Activated CD4-positive, alpha-beta memory T cell treated with anti-CD3 and anti-CD28 coated beads for 36 hours (primary cell): ENCODE measurements at regions of chr11 and their contacts with region 1.

Region 1: DNA sequence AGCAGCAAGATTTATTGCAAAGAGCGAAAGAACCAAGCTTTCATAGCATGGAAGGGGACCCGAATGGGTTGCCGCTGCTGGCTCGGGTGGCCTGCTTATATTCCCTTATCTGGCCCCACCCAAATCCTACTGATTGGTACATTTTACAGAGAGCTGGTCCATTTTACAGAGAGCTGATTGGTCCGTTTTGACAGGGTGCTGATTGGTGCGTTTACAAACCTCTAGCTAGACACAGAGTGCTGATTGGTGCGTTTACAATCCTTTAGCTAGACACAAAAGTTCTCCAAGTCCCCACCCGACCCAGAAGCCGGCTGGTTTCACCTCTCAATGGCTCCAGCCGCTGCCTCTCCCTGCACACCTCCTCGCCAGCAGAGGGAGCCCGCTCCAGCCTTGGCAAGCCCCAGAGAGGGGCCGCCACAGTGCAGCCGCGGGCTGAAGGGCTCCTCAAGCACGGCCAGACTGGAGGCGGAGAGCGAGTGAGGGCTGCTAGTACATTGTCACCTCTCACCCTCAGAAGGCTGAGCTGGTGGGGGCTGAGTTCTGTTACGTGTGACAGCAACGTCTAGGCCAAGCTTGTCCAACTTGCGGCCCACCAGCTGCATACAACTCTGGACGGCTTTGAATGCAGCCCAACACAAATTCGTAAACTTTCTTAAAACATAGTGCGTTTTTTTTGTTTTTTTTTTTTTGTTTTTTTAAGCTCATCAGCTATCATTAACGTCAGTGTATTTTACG is 8.7 kb downstream of the PTH start:
- DNase-seq: peak; percentile 76
- H3K4me3 Mint-ChIP-seq: peak overlapping the region; percentile 66
- H3K27ac Mint-ChIP-seq: peak overlapping the region; percentile 71
- H3K4me1 Mint-ChIP-seq: peaks cover 6% of the 10 kb centered on the region
- H3K27me3 Mint-ChIP-seq: peaks cover 2% of the 10 kb centered on the region

Region 2: DNA sequence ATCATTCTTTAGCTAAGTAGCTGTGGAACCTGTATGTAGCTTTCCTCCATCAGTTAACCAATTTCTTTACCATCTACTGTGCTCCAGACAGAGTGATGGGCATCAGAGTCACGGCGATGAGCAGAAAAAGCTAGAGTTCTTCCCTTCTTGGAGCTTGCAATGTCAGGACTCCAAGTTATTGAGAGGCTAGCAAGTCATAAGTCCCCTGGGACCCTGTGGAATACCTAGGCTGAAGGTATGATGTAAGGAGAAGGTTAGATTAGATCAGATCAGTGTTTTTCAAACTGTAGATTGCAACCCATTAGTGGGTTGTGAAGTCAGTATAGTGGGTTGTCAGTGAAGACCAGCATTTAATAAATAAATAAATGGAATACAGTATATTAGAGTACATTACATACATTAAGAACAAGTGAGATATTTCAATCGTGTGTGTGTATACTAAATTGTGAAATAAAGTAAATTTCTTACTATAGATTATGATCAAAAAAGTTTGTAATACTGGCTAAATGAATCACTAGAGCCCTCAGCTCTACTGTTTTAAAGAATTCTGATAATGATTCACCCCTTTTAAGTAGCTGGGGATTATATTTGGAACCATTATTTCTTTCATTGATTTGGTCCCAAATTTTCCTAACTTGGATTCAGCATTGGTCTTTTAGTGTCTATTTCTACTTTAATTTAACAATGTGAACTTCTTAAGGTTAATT is 425.7 kb before region 1 on chr11:
- CTCF ChIA-PET with region 1: no interaction called
- POLR2A ChIA-PET with region 1: no interaction called
- intact Hi-C with region 1: no loop called
- DNase-seq: no peak
- H3K4me3 Mint-ChIP-seq: no peak overlapping the region
- H3K27ac Mint-ChIP-seq: no peak overlapping the region
- H3K4me1 Mint-ChIP-seq: no peaks in the 10 kb centered on the region
- H3K27me3 Mint-ChIP-seq: peaks cover 15% of the 10 kb centered on the region

Region 3: GRCh38 chr11:13462901-13463778 is 24.0 kb before region 1 on chr11 and contains the start of gene BTBD10:
- CTCF ChIA-PET with region 1: interaction called, 14 read pairs
- POLR2A ChIA-PET with region 1: no interaction called
- intact Hi-C with region 1: loop called (anchors 1 kb)
- DNase-seq: peak; percentile 95
- H3K4me3 Mint-ChIP-seq: peak within 1 kb of the TSS; percentile 98
- H3K27ac Mint-ChIP-seq: peak within 1 kb of the TSS; percentile 95
- H3K4me1 Mint-ChIP-seq: peaks cover 35% of the 10 kb centered on the region
- H3K27me3 Mint-ChIP-seq: no peaks in the 10 kb centered on the region
- total RNA-seq, gene BTBD10: 22.3 to 24.3 TPM